A673 (cell line): ENCODE measurements at regions of chr12 and their contacts with region 1.

Region 1: DNA sequence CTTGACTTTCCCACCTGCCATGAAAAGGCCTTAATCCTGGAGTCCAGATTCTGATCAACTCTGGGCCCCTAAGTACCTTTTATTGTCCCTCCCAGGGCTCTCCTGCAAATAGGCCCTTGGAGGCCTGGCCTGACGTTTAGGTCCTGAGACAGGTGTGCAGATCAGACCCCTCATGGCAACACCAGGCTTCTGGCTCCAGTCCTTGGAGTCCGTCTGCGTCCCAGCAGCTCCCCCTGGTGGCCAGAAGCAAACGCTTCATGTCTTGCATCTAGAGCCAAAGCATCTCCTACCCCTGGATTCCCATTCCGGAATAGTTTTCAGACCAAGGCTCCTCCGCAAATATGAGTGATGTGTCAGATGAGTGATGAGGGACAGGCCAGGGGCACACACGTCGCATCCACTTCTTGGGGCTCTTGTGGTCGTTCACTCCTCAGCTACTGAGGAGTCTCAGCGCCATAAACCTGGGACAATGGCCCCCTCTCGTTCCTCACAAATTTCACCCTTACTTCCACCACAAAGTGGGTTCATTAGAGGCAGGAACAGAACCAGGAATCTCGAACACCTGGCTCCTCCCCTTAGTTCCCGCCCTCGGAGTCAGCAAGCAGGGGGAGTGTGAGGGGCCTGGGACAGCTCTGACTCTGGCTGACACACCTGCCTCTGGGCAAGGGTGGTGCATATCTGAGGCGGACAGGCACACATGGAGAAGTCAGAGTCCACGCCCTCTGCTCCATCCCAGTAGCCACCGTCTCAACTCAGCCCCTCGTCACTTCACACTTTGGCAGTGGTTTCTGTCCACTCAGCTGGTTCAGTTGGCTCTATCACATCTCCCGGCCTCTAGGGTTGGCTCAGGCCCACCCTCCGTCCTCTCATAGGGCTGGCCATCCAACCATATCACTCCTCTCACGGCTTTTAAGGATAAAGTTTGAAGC is 77.9 kb upstream of the PWP1 start:
- DNase-seq: peak; percentile 85
- H3K4me3 ChIP-seq: no peak overlapping the region
- H3K27ac ChIP-seq: no peak overlapping the region
- H3K4me1 ChIP-seq: no peaks in the 10 kb centered on the region
- H3K27me3 ChIP-seq: no peaks in the 10 kb centered on the region
- CTCF ChIP-seq: peak; percentile 92

Region 2: GRCh38 chr12:106790020-106790419 is 817.7 kb before region 1 on chr12:
- CTCF ChIA-PET with region 1: no interaction called
- POLR2A ChIA-PET with region 1: no interaction called
- intact Hi-C with region 1: no loop called
- DNase-seq: no peak
- H3K4me3 ChIP-seq: no peak overlapping the region
- H3K27ac ChIP-seq: no peak overlapping the region
- H3K4me1 ChIP-seq: no peaks in the 10 kb centered on the region
- H3K27me3 ChIP-seq: no peaks in the 10 kb centered on the region
- CTCF ChIP-seq: no peak

Region 3: DNA sequence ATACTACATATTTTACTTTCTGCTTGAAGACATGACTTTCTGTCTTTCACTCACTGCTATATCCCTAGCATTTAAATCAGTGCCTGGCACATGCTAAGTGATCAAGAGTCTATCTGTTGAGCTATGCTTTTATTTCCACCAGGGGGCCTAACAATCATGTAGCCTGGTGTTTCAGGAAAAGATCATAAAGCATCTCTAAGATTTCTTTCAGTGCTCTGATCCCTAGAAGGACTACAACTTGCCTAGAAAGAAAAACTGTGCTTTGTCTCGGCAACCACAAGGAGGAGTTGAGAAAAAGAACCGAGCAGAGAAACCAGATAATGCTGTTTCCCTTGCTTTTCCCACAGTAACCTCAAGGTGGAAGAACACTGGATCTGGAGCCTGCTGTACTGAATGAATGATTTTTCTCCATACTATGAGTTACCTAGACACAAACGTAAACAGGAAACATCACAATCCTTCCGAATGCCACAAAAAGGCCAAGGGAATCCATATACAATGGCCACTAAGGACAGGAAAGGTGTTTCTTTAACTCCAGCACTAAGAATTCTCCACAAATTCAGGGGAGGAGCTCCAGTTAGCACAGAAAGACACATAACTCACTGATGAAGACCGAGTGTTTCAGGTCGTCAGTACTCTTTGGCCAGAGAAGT is 515.6 kb before region 1 on chr12:
- CTCF ChIA-PET with region 1: no interaction called
- POLR2A ChIA-PET with region 1: no interaction called
- intact Hi-C with region 1: loop called (anchors 1 kb)
- DNase-seq: peak; percentile 97
- H3K4me3 ChIP-seq: peak overlapping the region; percentile 64
- H3K27ac ChIP-seq: peak overlapping the region; percentile 90
- H3K4me1 ChIP-seq: peaks cover 9% of the 10 kb centered on the region
- H3K27me3 ChIP-seq: no peaks in the 10 kb centered on the region
- CTCF ChIP-seq: peak; percentile 91

Region 4: GRCh38 chr12:107131832-107132616 is 475.7 kb before region 1 on chr12:
- CTCF ChIA-PET with region 1: interaction called, 52 read pairs
- POLR2A ChIA-PET with region 1: interaction called, 3 read pairs
- intact Hi-C with region 1: loop called (anchors 1 kb)
- DNase-seq: peak; percentile 76
- H3K4me3 ChIP-seq: no peak overlapping the region
- H3K27ac ChIP-seq: no peak overlapping the region
- H3K4me1 ChIP-seq: no peaks in the 10 kb centered on the region
- H3K27me3 ChIP-seq: no peaks in the 10 kb centered on the region
- CTCF ChIP-seq: peak; percentile 90

Region 5: DNA sequence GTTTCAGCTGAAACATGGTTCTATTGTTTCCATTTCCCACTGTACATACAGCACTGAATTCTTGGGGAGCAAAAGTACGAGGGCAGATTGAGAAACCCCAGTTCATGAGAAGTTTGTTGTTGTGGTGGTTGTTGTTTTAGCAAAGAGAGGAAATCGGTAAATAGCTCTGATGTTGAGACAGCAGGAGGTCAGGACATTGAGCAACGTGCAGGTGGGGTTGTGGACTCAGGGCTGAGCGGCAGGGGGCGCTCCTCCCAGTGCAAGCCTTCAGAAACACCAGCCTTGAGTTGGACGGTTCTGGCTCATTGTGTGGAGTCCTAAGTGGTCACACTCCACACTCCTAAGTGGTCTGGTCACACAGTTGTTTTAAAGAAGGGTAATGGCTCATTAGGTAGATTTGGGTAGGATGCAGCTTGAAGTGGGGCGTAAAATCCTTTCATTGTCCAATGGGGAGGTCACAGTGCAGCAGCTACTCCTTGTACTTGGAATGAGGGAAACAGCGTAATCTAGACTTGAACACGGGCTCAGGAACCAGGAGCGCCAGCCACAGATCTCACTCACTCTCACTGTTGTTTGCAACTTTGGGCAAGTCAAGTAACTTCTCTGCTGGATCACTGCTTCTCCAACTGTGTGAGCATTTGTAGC is 63.4 kb after region 1 on chr12:
- CTCF ChIA-PET with region 1: no interaction called
- POLR2A ChIA-PET with region 1: no interaction called
- intact Hi-C with region 1: no loop called
- DNase-seq: peak; percentile 44
- H3K4me3 ChIP-seq: no peak overlapping the region
- H3K27ac ChIP-seq: no peak overlapping the region
- H3K4me1 ChIP-seq: no peaks in the 10 kb centered on the region
- H3K27me3 ChIP-seq: peaks cover 29% of the 10 kb centered on the region
- CTCF ChIP-seq: peak; percentile 87